Posterior vena cava (tissue), 2 donors: ENCODE measurements at regions of chr2 and their contacts with region 1.

Region 1: DNA sequence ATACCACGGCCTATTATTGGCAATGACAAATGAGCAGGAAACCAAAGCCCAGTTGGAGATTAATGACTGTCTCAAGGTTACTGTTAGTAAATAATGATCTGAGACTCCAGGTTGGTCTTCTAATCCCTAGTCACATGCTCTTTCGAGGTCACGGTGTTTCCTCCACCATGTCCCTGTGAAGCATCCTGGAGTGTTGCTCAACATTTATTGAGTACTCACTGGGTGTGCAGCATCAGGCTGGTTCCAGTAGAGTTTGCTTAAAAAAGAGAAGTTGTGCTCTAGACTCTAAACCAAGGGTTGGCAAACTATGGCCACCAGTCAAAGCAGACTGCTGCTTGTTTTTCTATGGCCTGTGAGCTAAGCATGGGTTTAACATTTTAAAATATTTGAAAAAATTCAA is 263.8 kb upstream of the ATP5MC3 start:
- DNase-seq: no peak

Region 2: DNA sequence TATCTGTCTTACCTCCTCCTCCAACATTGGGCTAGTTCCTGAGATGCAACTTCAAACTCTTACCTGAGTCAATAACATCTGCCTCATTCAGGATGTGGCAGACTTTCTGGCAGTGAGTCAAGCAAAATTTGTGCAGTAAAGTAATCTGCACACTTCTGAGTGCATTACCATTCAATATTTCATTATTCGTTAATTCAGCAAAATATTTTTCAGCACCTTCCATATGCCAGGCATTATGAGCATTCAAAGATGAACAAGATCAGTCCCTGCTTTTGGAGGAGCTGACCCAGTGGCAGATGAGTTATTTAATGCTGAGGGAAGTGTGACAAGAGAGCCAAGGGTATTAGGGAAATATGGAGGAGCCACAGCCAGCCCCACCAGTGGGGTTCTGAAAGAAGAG is 217.1 kb after region 1 on chr2:
- intact Hi-C with region 1: loop called in 1 of 2 experiments (anchors 10 kb)
- DNase-seq: no peak

Region 3: DNA sequence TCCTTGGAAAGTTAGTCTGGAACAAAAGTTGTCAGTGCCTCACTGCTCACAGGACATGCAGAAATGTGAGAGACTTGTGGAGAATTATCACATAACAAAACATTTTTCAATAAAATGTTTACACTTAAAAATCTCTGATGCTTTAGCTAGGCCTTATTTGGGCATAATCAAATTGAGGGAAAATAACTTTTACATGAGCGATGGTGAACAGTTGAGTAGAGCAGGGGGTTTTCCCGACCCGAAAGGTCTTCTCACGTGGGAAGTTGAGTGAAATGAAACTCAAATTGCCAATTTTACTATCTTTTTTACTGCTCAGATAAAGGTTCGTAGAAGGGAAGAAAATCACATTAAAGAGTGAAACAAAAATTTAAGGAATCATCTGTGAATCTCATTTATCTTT is 1289.6 kb after region 1 on chr2:
- intact Hi-C with region 1: loop called in 1 of 2 experiments (anchors 5 kb)
- DNase-seq: no peak